Naive thymus-derived CD8-positive, alpha-beta T cell (primary cell): ENCODE measurements at regions of chr1 and their contacts with region 1.

Region 1: DNA sequence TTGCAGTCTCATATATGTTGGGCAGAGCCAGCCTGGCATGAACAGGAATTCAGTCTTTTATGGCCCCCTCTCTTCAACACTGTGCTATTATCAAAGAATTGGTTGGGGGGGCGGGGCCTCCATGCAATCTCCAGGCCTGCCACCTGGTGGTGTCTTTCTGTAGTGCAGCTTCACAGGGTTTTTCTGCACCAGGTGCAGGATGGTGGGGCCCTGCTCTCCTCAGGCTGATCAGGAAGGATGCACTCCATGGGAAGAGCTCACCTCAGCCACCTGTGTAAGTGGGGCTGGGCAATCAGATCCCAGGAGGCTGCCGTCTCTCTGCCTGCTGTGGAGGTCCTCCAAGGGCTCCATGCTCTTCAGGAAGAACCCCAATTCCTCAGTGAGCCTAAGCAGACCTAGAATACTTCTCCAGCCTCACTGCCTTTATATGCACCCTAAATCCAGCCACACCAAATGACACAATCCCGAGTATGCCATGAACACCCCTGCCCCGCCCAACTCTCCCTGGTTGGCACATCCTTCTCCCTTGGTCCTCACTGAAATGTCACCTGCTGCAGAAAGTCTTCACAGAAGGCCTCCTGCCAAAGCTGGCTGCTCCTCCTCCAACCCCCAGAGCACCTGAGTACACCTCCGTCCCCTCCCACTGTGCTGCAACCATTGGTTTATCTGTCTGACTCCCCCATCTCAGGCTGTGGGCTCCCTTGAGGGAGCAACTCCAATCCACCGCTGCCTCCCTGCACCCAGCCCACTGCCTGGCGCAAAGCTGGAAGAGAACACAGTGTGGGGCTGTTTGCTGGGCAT is 16.5 kb downstream of the STK40 start:
- DNase-seq: peak; percentile 72 to 91 (median 83)
- ATAC-seq: peak; percentile 41 to 45
- H3K4me3 Mint-ChIP-seq: peak overlapping the region in 5 of 10 donors; percentile 15 to 46 (median 37)
- H3K27ac Mint-ChIP-seq: peak overlapping the region; percentile 74 to 98 (median 88)
- H3K4me1 Mint-ChIP-seq: peaks cover 35 to 81% (median 67%) of the 10 kb centered on the region in 4 donors
- H3K27me3 Mint-ChIP-seq: no peaks in the 10 kb centered on the region

Region 2: GRCh38 chr1:36342481-36343478 is 26.5 kb before region 1 on chr1:
- POLR2A ChIA-PET with region 1: interaction called, 26 read pairs
- DNase-seq: peak; percentile 49 to 81 (median 62)
- ATAC-seq: peak; percentile 84 to 96
- H3K4me3 Mint-ChIP-seq: peak overlapping the region in 1 of 10 donors; percentile 23
- H3K27ac Mint-ChIP-seq: peak overlapping the region in 5 of 10 donors; percentile 66 to 91 (median 85)
- H3K4me1 Mint-ChIP-seq: peaks cover 11 to 28% (median 16%) of the 10 kb centered on the region in 4 donors
- H3K27me3 Mint-ChIP-seq: no peaks in the 10 kb centered on the region

Region 3: GRCh38 chr1:36350659-36351226 is 18.5 kb before region 1 on chr1:
- POLR2A ChIA-PET with region 1: interaction called, 59 read pairs
- DNase-seq: peak in 8 of 10 donors; percentile 37 to 65 (median 46)
- ATAC-seq: peak; percentile 99 to 100
- H3K4me3 Mint-ChIP-seq: peak overlapping the region in 8 of 10 donors; percentile 12 to 75 (median 62)
- H3K27ac Mint-ChIP-seq: peak overlapping the region; percentile 36 to 94 (median 81)
- H3K4me1 Mint-ChIP-seq: peaks cover 14 to 32% (median 19%) of the 10 kb centered on the region in 4 donors
- H3K27me3 Mint-ChIP-seq: no peaks in the 10 kb centered on the region

Region 4: GRCh38 chr1:36397378-36398230 is 28.3 kb after region 1 on chr1 and contains the start of gene LSM10:
- POLR2A ChIA-PET with region 1: interaction called, 27 read pairs
- DNase-seq: peak; percentile 80 to 92 (median 85)
- ATAC-seq: peak; percentile 90 to 96
- H3K4me3 Mint-ChIP-seq: peak within 1 kb of the TSS; percentile 89 to 100 (median 98)
- H3K27ac Mint-ChIP-seq: peak within 1 kb of the TSS; percentile 94 to 100 (median 99)
- H3K4me1 Mint-ChIP-seq: peaks cover 17 to 58% (median 41%) of the 10 kb centered on the region in 4 donors
- H3K27me3 Mint-ChIP-seq: no peaks in the 10 kb centered on the region
- polyA plus RNA-seq, gene LSM10: 118 to 122 (median 121) TPM